ENCODE measurements at regions of chr6 and their contacts with region 1.

Region 1: GRCh38 chr6:32113386-32114352 is 4.5 kb upstream of the TNXB start:
- DNase-seq: peak; percentile 95 to 98 (median 97)
- H3K4me3 ChIP-seq: no peak overlapping the region
- H3K27ac ChIP-seq: peak overlapping the region; percentile 78 to 82
- H3K4me1 ChIP-seq: peaks cover 29% of the 10 kb centered on the region
- H3K27me3 ChIP-seq: no peaks in the 10 kb centered on the region
- CTCF ChIP-seq: peak in 2 of 3 donors; percentile 83 to 90
- EP300 ChIP-seq: peak; percentile 84
- POLR2A ChIP-seq: no peak

Region 2: DNA sequence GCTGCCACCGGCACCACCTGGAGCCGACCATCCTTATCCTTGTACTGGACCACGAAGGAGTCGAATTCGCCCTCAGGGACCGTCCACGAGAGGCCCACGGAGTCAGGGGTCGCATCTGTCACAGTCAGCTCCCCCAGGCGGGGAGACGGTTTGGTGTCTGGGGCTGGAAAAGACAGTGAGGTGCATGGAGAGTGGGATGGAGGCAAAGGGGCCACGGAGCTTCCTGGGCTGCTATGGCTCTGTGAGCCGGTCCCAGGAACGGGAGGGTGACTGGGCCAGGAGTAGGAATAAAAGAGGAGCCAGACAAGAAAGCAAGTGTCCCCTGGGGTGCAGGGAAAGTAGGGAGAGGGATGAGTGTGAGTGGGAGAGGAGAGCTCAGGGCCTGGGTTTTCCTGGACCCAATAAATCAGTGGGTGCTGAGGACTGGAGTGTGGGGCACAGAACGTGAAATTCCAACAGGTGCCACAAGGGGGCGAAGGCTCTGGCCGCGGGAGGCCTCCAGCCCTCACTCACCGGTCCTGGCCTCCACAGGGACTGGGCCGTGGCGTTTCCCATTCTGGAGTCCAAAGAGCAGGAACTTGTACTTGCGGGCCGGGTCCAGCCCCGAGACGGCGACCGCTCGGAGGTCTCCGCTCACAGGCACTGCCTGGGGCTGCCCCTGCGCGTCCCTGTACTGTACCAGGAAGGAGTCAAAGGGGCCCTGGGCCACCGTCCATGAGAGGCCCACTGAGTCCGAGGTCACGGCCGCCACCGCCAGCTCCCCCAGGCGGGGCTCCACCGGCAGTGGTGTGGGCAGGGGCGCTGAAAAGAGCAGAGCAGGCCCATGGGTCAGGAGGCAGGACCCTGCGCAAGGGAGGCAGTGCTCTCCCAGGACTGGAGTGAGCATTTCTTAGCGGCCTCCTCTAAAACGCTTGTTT is 65.6 kb before region 1 on chr6:
- intact Hi-C with region 1: loop called in 1 of 4 experiments (anchors 2 kb)
- DNase-seq: peak; percentile 69 to 87 (median 83)
- H3K4me3 ChIP-seq: no peak overlapping the region
- H3K27ac ChIP-seq: peak overlapping the region; percentile 73 to 83
- H3K4me1 ChIP-seq: peaks cover 10% of the 10 kb centered on the region
- H3K27me3 ChIP-seq: no peaks in the 10 kb centered on the region
- CTCF ChIP-seq: peak; percentile 61 to 95 (median 85)
- EP300 ChIP-seq: no peak
- POLR2A ChIP-seq: no peak